Psoas muscle (tissue), 8 donors: ENCODE measurements at regions of chr20 and their contacts with region 1.

Region 1: DNA sequence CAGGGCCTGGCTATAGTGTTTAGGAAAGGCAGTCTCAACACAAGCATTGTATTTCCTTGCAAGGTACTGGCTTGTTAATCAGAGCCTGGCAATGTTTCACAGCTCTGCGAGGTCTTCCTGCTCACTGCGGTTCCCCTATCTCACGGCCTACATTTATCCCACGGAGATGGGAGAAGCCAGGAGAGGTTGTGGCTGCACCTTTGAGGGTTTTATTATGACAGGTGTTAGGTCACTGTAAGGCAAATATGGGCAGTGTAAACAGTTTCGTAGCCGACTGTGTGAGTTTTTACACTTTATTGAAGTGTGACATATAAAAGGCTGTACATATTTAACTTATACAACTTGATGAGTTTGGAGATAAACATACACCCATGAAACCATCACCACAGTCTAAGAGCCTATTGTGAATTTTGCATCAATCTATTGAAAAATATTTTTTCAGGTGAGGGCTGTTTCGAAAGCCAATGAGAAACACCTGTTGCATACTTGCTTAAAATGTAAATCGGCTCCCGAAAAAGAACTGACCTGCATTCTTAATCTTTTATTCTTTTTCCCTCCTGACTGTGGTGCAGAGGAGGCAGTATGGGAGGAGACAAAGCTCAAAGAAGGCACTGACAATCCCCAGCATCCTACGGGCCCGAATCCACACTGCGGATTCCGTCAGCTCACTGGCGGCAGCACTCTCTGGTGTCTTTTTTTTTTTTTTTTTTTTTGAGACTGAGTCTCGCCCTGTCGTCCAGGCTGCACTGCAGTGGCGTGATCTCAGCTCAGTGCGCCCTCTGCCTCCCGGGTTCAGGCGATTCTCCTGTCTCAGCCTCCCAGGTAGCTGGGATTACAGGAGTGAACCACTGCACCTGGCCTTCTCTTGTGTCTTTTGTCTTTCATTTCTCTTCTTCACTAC is 7.5 kb upstream of the RBM38 start:
- DNase-seq: peak in 1 of 2 donors; percentile 27
- ATAC-seq: no peak
- H3K4me3 ChIP-seq: no peak overlapping the region
- H3K27ac ChIP-seq: no peak overlapping the region
- H3K4me1 ChIP-seq: no peaks in the 10 kb centered on the region
- H3K27me3 ChIP-seq: no peaks in the 10 kb centered on the region
- CTCF ChIP-seq: no peak

Region 2: DNA sequence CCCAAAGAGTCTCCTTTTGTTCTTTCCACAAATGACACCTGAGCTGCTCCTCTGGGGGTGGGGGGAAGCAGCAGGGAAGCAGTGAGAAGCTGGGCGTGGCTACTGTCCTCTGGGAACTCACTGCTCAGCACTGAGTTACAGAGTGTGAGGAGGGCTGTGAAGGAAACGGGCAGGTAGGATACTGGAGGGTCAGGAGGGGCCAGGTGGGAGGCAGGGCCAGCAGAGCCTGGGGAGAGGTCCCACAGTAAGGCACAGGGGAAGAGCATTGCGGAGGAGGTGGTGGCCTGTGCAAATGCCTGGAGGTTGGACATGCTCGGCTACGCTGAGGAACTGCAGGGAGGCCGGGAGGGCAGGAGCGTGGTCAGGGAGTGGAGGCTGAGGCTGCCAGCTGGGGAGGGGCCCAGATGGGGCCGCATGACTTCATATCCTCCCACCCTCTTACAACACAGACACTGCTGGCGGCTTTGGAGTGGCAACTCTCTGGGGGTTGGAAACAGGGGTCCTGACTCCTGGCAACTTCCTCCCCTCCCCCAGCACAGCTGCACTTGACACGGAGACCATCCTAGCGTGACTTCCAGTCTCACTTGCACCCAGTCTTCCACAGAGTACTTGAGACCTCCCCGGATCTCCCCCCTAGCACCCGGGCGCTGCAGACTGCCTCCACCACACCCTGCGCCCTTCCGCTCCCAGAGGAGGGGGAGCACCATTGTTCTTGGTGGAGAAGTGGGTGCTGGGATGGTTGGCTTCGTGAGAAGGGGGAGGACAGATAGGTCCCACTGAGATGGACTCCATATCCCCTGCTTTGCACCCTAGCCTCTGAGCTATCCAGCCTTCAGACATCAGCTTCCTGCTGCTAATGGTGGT is 41.7 kb after region 1 on chr20:
- intact Hi-C with region 1: no loop called
- DNase-seq: peak in 1 of 2 donors; percentile 66
- ATAC-seq: peak in 1 of 4 donors; percentile 32
- H3K4me3 ChIP-seq: no peak overlapping the region
- H3K27ac ChIP-seq: no peak overlapping the region
- H3K4me1 ChIP-seq: peaks cover 9% of the 10 kb centered on the region
- H3K27me3 ChIP-seq: no peaks in the 10 kb centered on the region
- CTCF ChIP-seq: no peak

Region 3: DNA sequence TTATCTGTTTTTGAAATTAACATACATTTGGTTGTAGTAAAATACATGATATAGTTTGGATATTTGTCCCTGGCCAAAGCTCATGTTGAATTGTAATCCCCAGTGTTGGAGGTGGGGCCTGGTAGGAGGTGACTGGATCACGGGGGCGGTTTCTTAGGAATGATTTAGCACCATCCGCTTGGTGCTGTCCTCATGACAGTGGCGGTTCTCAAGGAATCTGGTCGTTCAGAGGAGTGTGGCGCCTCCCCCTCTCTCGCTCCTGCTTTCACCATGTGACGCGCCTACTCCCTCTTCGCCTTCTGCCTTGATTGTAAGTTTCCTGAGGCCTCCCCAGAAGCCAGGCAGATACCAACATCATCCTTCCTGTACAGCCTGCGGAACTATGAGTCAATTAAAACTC is 112.3 kb after region 1 on chr20:
- intact Hi-C with region 1: loop called (anchors 1 to 2 kb)
- DNase-seq: no peak
- ATAC-seq: no peak
- H3K4me3 ChIP-seq: no peak overlapping the region
- H3K27ac ChIP-seq: no peak overlapping the region
- H3K4me1 ChIP-seq: peaks cover 3% of the 10 kb centered on the region
- H3K27me3 ChIP-seq: no peaks in the 10 kb centered on the region
- CTCF ChIP-seq: no peak